ENCODE measurements at regions of chr4 and their contacts with region 1.

Region 1: GRCh38 chr4:39083164-39083563 is 21.1 kb downstream of the KLHL5 start:
- DNase-seq: peak; percentile 34
- ATAC-seq: no peak
- H3K4me3 ChIP-seq: no peak overlapping the region
- H3K27ac ChIP-seq: no peak overlapping the region
- H3K4me1 ChIP-seq: no peaks in the 10 kb centered on the region
- H3K27me3 ChIP-seq: no peaks in the 10 kb centered on the region
- CTCF ChIP-seq: no peak
- POLR2A ChIP-seq: no peak
- RAD21 ChIP-seq: no peak

Region 2: GRCh38 chr4:38791010-38791409 is 292.2 kb before region 1 on chr4:
- CTCF ChIA-PET with region 1: no interaction called
- POLR2A ChIA-PET with region 1: no interaction called
- dilution Hi-C with region 1: no loop called
- in situ Hi-C with region 1: no loop called
- intact Hi-C with region 1: no loop called
- DNase-seq: no peak
- ATAC-seq: no peak
- H3K4me3 ChIP-seq: no peak overlapping the region
- H3K27ac ChIP-seq: no peak overlapping the region
- H3K4me1 ChIP-seq: no peaks in the 10 kb centered on the region
- H3K27me3 ChIP-seq: peaks cover 3% of the 10 kb centered on the region; the same call in 1 of the 2 replicates
- CTCF ChIP-seq: no peak
- POLR2A ChIP-seq: no peak
- RAD21 ChIP-seq: no peak

Region 3: GRCh38 chr4:39032218-39033085 is 50.7 kb before region 1 on chr4 and contains the start of gene TMEM156:
- CTCF ChIA-PET with region 1: no interaction called
- POLR2A ChIA-PET with region 1: interaction called, 10 read pairs
- dilution Hi-C with region 1: no loop called
- in situ Hi-C with region 1: no loop called
- intact Hi-C with region 1: no loop called
- DNase-seq: peak; percentile 80
- ATAC-seq: peak; percentile 63
- H3K4me3 ChIP-seq: no peak within 1 kb of the TSS
- H3K27ac ChIP-seq: peak within 1 kb of the TSS; percentile 87
- H3K4me1 ChIP-seq: peaks cover 20% of the 10 kb centered on the region
- H3K27me3 ChIP-seq: no peaks in the 10 kb centered on the region
- CTCF ChIP-seq: no peak
- POLR2A ChIP-seq: no peak
- RAD21 ChIP-seq: no peak
- total RNA-seq, gene TMEM156: 0.54 and 0.83 TPM in 2 replicates